Heart left ventricle (tissue), 16 donors: ENCODE measurements at regions of chr2 and their contacts with region 1.

Region 1: DNA sequence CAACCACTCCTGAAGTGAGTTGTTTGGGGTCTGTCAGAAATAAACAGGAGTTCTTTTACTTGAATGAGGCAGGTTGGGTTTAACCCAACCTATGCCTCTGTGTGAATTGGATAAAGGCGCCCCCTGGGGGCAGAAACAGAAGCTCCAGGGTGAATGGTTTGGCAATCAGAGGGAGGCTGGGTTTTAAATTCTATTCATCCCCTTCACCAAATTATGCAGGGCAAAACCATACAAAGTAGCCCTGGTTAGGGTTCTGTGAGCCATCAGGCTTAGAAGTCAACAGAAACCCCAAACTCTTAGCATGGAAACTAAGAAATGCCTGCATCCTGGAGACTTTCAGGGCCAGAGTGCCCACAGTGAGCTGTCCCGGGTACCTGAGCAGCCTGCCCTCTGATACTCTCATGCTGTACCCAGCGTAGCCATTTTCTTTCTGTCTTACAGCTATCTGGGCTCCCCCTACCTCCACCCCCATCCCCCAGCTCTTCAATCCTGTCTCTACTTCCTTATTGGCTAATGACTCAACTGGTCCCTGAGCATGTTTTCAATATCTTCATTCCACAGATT is 241.5 kb downstream of the ICOS start:
- DNase-seq: peak; percentile 19 to 62 (median 40)
- ATAC-seq: peak in 2 of 4 donors; percentile 50 to 70
- H3K4me3 ChIP-seq: no peak overlapping the region
- H3K27ac ChIP-seq: no peak overlapping the region
- H3K4me1 ChIP-seq: peaks cover 0 to 15% (median 0%) of the 10 kb centered on the region in 12 donors
- H3K27me3 ChIP-seq: peaks cover 0 to 8% (median 0%) of the 10 kb centered on the region in 9 donors
- CTCF ChIP-seq: peak; percentile 55 to 78 (median 66)
- POLR2A ChIP-seq: no peak

Region 2: GRCh38 chr2:203893401-203893800 is 284.7 kb before region 1 on chr2:
- intact Hi-C with region 1: no loop called
- DNase-seq: peak; percentile 32 to 71 (median 57)
- ATAC-seq: peak; percentile 46 to 93 (median 88)
- H3K4me3 ChIP-seq: no peak overlapping the region
- H3K27ac ChIP-seq: peak overlapping the region in 5 of 12 donors; percentile 15 to 69 (median 25)
- H3K4me1 ChIP-seq: peaks cover 0 to 32% (median 0%) of the 10 kb centered on the region in 12 donors
- H3K27me3 ChIP-seq: no peaks in the 10 kb centered on the region
- CTCF ChIP-seq: no peak
- POLR2A ChIP-seq: no peak

Region 3: DNA sequence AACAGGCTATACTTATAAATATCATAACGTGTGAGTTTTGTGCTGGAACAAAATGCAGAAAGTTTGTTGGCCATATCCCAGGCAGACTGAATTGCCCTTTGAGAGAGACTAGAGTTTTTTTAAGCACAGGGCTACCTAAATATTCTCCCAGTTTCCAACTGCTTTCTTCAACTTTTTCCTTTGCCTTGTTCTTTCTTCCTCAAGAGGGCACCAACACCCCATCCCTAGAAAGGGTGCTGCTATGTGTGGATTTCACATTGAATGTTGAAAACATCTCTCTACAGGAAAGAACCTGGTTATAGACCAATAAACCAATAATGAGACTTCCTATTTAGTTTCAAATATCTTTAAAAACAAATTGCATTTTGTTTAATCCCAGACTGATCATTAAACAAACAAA is 153.6 kb before region 1 on chr2:
- intact Hi-C with region 1: loop called in 1 of 10 experiments (anchors 5 kb)
- DNase-seq: no peak
- ATAC-seq: peak in 1 of 4 donors; percentile 55
- H3K4me3 ChIP-seq: no peak overlapping the region
- H3K27ac ChIP-seq: no peak overlapping the region
- H3K4me1 ChIP-seq: peaks cover 0 to 3% (median 0%) of the 10 kb centered on the region in 12 donors
- H3K27me3 ChIP-seq: no peaks in the 10 kb centered on the region
- CTCF ChIP-seq: peak; percentile 16 to 65 (median 48)
- POLR2A ChIP-seq: no peak

Region 4: GRCh38 chr2:204108330-204108751 is 69.7 kb before region 1 on chr2:
- intact Hi-C with region 1: loop called in 3 of 10 experiments (anchors 1 to 5 kb)
- DNase-seq: peak in 1 of 5 donors; percentile 30
- ATAC-seq: peak in 3 of 4 donors; percentile 68 to 75 (median 68)
- H3K4me3 ChIP-seq: no peak overlapping the region
- H3K27ac ChIP-seq: peak overlapping the region in 6 of 12 donors; percentile 36 to 74 (median 54)
- H3K4me1 ChIP-seq: peaks cover 0 to 40% (median 20%) of the 10 kb centered on the region in 12 donors
- H3K27me3 ChIP-seq: no peaks in the 10 kb centered on the region
- CTCF ChIP-seq: peak; percentile 17 to 71 (median 62)
- POLR2A ChIP-seq: no peak

Region 5: DNA sequence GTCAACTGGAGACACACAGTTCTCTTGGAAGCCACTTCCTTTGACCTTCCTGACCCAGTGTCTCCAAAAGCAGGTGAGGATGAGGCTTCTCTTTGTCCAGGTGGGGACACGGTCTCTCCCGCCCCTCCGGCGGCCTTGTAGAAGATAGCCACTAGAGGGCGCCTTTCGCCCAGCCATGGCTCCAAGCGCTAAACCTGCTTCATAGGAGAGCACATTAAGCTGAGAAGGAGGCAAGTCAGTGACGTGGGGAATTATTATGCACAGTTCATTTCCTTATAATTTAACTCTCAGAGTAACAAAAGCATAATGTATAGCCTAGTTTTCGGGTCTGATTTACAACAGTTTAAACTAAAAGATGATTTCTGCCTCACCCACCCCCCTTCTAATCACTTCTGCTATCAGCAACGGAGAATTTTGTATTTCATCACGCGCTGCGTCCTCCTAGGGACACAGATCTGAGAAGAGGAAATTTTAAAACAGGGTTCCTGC is 32.8 kb before region 1 on chr2:
- intact Hi-C with region 1: loop called in 3 of 10 experiments (anchors 1 to 2 kb)
- DNase-seq: peak; percentile 72 to 82 (median 75)
- ATAC-seq: peak; percentile 84 to 99 (median 95)
- H3K4me3 ChIP-seq: peak overlapping the region in 11 of 12 donors; percentile 25 to 61 (median 47)
- H3K27ac ChIP-seq: peak overlapping the region in 9 of 12 donors; percentile 3 to 67 (median 46)
- H3K4me1 ChIP-seq: peaks cover 0 to 15% (median 1%) of the 10 kb centered on the region in 12 donors
- H3K27me3 ChIP-seq: peaks cover 0 to 4% (median 0%) of the 10 kb centered on the region in 9 donors
- CTCF ChIP-seq: peak; percentile 89 to 99 (median 96)
- POLR2A ChIP-seq: no peak